ENCODE measurements at regions of chr7 and their contacts with region 1.

Region 1: GRCh38 chr7:29921404-29922010 is 68.1 kb downstream of the SCRN1 start:
- DNase-seq: peak; percentile 21 to 67
- H3K4me3 ChIP-seq: no peak overlapping the region
- H3K27ac ChIP-seq: no peak overlapping the region
- H3K4me1 ChIP-seq: no peaks in the 10 kb centered on the region
- H3K27me3 ChIP-seq: no peaks in the 10 kb centered on the region
- CTCF ChIP-seq: peak; percentile 61 to 99 (median 89)
- EP300 ChIP-seq: no peak
- POLR2A ChIP-seq: peak in 1 of 2 experiments; percentile 24; a peak in 1 of 3 replicates
- RAD21 ChIP-seq: peak; percentile 95 to 96

Region 2: DNA sequence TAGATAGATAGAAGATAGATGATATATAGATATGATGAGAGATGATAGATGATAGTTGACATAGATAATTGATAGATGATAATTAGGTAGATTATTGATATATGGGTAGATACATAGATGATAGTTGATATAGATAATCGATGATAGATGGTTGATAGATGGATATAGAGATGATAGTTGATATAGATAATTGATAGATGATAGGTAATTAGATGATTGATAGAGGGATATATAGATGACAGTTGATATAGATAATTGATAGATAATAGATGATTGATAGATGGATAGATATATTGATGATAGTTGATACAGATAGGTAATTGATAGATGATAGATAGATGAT is 285.5 kb before region 1 on chr7:
- CTCF ChIA-PET with region 1: interaction called, 15 read pairs
- POLR2A ChIA-PET with region 1: no interaction called
- DNase-seq: no peak
- H3K4me3 ChIP-seq: no peak overlapping the region
- H3K27ac ChIP-seq: no peak overlapping the region
- H3K4me1 ChIP-seq: no peaks in the 10 kb centered on the region; a peak in 1 of 7 replicates
- H3K27me3 ChIP-seq: no peaks in the 10 kb centered on the region
- CTCF ChIP-seq: no peak
- EP300 ChIP-seq: no peak
- POLR2A ChIP-seq: no peak
- RAD21 ChIP-seq: no peak

Region 3: DNA sequence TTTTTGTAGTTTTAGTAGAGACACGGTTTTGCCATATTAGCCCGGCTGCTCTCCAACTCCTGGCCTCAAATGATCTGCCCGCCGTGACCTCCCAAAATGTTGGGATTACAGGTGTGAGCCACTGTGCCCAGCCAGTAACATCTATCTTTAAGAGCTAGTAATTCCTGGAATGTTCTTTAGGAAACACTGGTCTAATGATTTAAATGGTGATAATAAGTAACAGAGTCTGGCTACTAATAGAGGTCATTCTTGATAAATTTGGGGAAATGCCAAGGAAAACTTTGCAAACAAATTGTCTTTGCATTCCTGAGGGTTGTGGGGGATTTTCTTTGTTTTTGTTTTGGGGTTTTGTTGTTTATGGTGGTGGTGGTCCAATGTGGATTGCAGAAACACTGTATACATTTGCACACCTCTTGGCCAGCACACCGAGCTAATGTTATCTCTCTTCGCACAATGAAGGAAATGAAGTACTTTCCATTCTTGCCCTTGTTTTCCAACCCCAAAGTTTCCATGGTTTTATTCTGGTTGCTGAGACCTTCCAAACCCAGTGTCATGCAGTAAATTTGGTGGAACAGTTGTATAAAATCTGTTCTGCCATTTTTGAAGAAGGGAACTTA is 166.5 kb before region 1 on chr7:
- CTCF ChIA-PET with region 1: interaction called, 23 read pairs
- POLR2A ChIA-PET with region 1: no interaction called
- DNase-seq: no peak
- H3K4me3 ChIP-seq: no peak overlapping the region
- H3K27ac ChIP-seq: no peak overlapping the region
- H3K4me1 ChIP-seq: no peaks in the 10 kb centered on the region
- H3K27me3 ChIP-seq: peaks cover 0 to 1% (median 0%) of the 10 kb centered on the region in 4 experiments; a peak in 1 of 7 replicates
- CTCF ChIP-seq: no peak
- EP300 ChIP-seq: no peak
- POLR2A ChIP-seq: no peak
- RAD21 ChIP-seq: no peak

Region 4: GRCh38 chr7:29884399-29885272 is 36.9 kb before region 1 on chr7:
- CTCF ChIA-PET with region 1: interaction called, 18 read pairs
- POLR2A ChIA-PET with region 1: no interaction called
- DNase-seq: peak in 1 of 2 experiments; percentile 27
- H3K4me3 ChIP-seq: peak overlapping the region; percentile 63 to 74 (median 64)
- H3K27ac ChIP-seq: no peak overlapping the region
- H3K4me1 ChIP-seq: peaks cover 7 to 15% (median 15%) of the 10 kb centered on the region in 4 experiments
- H3K27me3 ChIP-seq: no peaks in the 10 kb centered on the region
- CTCF ChIP-seq: peak; percentile 21 to 37 (median 30); a peak in 3 of 4 replicates
- EP300 ChIP-seq: no peak
- POLR2A ChIP-seq: peak in 1 of 2 experiments; percentile 43; a peak in 2 of 3 replicates
- RAD21 ChIP-seq: peak in 1 of 2 experiments; percentile 28; a peak in 1 of 4 replicates

Region 5: DNA sequence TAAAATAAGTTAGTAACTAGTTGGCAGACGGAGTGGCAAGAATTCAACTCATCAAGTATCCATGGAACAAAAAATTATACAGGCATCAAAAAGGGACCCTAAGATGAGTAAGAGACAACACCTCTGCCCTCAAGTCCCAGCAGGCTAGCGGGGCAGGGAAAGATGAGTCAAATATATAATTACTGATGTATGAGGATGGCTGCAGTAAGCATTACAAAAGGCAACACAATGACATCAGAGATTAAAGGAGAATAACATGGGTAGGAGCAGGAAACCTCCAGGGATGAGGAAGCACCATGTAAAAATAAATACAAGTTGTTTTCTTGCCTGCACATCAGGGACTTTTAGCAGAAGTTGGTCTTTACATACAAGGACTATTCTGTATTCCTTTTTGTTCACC is 18.7 kb after region 1 on chr7:
- CTCF ChIA-PET with region 1: interaction called, 12 read pairs
- POLR2A ChIA-PET with region 1: no interaction called
- DNase-seq: no peak
- H3K4me3 ChIP-seq: no peak overlapping the region
- H3K27ac ChIP-seq: no peak overlapping the region
- H3K4me1 ChIP-seq: no peaks in the 10 kb centered on the region
- H3K27me3 ChIP-seq: no peaks in the 10 kb centered on the region
- CTCF ChIP-seq: no peak
- EP300 ChIP-seq: no peak
- POLR2A ChIP-seq: no peak
- RAD21 ChIP-seq: no peak

Region 6: DNA sequence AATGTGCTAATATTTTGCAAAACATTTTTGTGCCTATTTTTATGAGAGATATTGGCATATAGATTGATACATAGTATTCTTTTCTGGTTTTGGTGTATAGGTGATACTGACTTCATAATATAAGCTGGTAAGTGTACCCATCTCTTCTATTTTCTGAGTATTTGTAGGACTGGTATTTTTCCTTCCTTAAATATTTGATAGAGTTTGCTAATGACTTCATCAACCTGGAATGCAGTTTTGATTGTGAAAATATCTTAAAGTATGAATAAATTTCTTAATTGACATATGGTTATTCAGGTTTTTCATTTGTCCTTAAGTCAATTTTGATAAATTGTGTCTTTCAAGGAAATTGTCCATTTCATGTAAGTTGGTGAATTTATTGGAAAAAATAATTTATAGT is 74.1 kb after region 1 on chr7:
- CTCF ChIA-PET with region 1: no interaction called
- POLR2A ChIA-PET with region 1: no interaction called
- DNase-seq: no peak
- H3K4me3 ChIP-seq: no peak overlapping the region
- H3K27ac ChIP-seq: no peak overlapping the region
- H3K4me1 ChIP-seq: no peaks in the 10 kb centered on the region; a peak in 1 of 7 replicates
- H3K27me3 ChIP-seq: no peaks in the 10 kb centered on the region; a peak in 1 of 7 replicates
- CTCF ChIP-seq: no peak
- EP300 ChIP-seq: no peak
- POLR2A ChIP-seq: no peak
- RAD21 ChIP-seq: no peak

Measured in H1 (cell line).